Activated T-helper 1 cell treated with anti-CD3 and anti-CD28 coated beads, Interleukin-12 subunit alpha, Interleukin-12 subunit beta, Interleukin-2, Interleukin-4 antibody, amounts not matched to agents 30 ng/mL and 10 ng/mL and 1 ng/mL, durations not matched to agents 14 hours and 24 hours and 36 hours (primary cell): ENCODE measurements at regions of chr20 and their contacts with region 1.

Region 1: DNA sequence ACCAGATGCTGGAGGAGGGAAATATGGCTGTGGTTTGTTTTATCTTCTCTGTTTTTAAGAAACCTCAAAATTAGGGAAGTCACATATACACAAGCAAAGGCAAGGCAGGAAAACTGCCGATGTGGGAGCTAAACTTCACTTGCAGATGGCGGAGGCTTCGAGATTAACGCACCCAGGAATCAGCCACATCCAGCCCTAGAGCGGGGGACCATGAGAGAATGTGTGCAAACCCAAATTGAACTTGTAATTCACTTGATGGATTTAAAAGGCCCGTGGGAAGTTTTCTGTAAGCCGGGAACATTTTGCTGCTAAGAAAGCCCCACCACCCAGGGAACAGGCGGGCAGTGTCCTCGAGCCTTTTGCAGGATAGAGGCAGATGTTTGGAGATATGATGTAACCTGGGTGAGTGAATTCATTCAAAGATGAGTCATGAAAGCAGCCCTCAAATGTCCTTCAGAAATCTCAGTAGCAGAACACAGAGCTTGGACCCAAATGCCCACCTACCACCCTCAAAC is 39.9 kb downstream of the PREX1 start:
- DNase-seq: no peak
- H3K4me3 Mint-ChIP-seq: no peak overlapping the region
- H3K27ac Mint-ChIP-seq: peak overlapping the region; percentile 27
- H3K4me1 Mint-ChIP-seq: peaks cover 60% of the 10 kb centered on the region
- H3K27me3 Mint-ChIP-seq: no peaks in the 10 kb centered on the region

Region 2: GRCh38 chr20:48718857-48719578 is 68.9 kb before region 1 on chr20:
- intact Hi-C with region 1: loop called (anchors 5 kb)
- DNase-seq: peak; percentile 44
- H3K4me3 Mint-ChIP-seq: peak overlapping the region; percentile 5
- H3K27ac Mint-ChIP-seq: peak overlapping the region; percentile 88
- H3K4me1 Mint-ChIP-seq: peaks cover 89% of the 10 kb centered on the region
- H3K27me3 Mint-ChIP-seq: no peaks in the 10 kb centered on the region

Region 3: DNA sequence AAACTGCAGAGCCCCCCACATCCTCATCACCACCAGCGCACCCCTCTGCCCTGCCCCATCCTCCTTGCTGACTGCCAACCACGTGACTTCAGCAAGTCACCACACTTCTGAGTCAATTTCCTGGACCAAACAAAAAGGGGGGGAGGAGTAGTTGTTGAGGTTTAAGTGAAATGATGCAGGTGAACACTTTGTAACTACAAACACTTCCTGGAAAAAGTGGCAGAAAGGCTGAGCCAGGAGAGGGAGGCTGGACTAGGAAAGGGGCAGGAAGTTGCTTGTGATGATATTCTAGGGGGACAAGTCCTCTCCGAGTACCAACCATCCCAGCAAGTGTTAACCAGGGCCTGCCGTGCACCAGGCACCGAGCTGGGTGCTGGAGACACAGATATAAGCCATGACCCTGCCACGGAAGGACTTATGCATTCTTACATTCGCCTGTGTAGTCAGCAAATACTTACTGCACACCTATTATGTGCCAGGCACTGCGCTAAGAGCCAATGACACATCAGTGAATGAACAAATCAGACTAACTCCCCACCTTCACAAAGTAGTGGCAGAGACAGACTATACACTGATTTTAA is 27.4 kb before region 1 on chr20:
- intact Hi-C with region 1: loop called (anchors 1 kb)
- DNase-seq: peak; percentile 75
- H3K4me3 Mint-ChIP-seq: peak overlapping the region; percentile 78
- H3K27ac Mint-ChIP-seq: peak overlapping the region; percentile 96
- H3K4me1 Mint-ChIP-seq: peaks cover 86% of the 10 kb centered on the region
- H3K27me3 Mint-ChIP-seq: no peaks in the 10 kb centered on the region

Region 4: GRCh38 chr20:48846498-48847485 is 58.9 kb after region 1 on chr20:
- intact Hi-C with region 1: loop called (anchors 1 kb)
- DNase-seq: no peak
- H3K4me3 Mint-ChIP-seq: peak overlapping the region; percentile 32
- H3K27ac Mint-ChIP-seq: peak overlapping the region; percentile 98
- H3K4me1 Mint-ChIP-seq: peaks cover 23% of the 10 kb centered on the region
- H3K27me3 Mint-ChIP-seq: peaks cover 18% of the 10 kb centered on the region

Region 5: GRCh38 chr20:48892844-48893243 is 104.9 kb after region 1 on chr20:
- intact Hi-C with region 1: no loop called
- DNase-seq: no peak
- H3K4me3 Mint-ChIP-seq: no peak overlapping the region
- H3K27ac Mint-ChIP-seq: no peak overlapping the region
- H3K4me1 Mint-ChIP-seq: no peaks in the 10 kb centered on the region
- H3K27me3 Mint-ChIP-seq: peaks cover 27% of the 10 kb centered on the region

Region 6: GRCh38 chr20:48921151-48921898 is 133.4 kb after region 1 on chr20 and contains the start of gene ARFGEF2:
- intact Hi-C with region 1: loop called (anchors 1 kb)
- DNase-seq: peak; percentile 96
- H3K4me3 Mint-ChIP-seq: peak within 1 kb of the TSS; percentile 98
- H3K27ac Mint-ChIP-seq: peak within 1 kb of the TSS; percentile 99
- H3K4me1 Mint-ChIP-seq: peaks cover 50% of the 10 kb centered on the region
- H3K27me3 Mint-ChIP-seq: peaks cover 4% of the 10 kb centered on the region
- total RNA-seq, gene ARFGEF2: 28.3 and 30.1 TPM in 2 replicates

Region 7: DNA sequence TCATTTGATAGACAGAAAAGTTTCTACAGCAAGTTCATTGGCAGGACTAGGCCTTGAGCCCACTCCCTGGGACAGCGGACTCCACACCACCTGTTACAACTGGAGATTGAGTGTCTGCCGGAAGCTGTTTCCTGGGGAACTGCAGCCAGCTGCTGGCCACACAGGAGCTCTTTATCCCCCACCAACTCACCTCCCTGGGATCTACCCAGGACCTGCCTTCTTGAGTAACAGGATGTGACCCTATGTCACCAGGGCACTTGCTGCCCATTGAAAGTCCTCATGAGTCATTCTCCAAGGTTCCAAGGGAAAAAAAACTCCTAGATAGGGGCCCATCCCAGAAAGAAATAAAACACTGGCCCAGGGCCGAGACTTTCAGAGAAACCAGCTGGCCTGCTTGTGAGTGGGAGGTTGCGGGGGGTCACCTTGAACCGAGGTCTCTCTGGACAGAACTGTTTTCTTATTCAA is 987.3 kb after region 1 on chr20:
- intact Hi-C with region 1: no loop called
- DNase-seq: no peak
- H3K4me3 Mint-ChIP-seq: no peak overlapping the region
- H3K27ac Mint-ChIP-seq: peak overlapping the region; percentile 1
- H3K4me1 Mint-ChIP-seq: peaks cover 32% of the 10 kb centered on the region
- H3K27me3 Mint-ChIP-seq: peaks cover 5% of the 10 kb centered on the region